Right ventricle myocardium inferior (tissue), 1 donor: ENCODE measurements at regions of chr1 and their contacts with region 1.

Region 1: GRCh38 chr1:109579491-109579890 is 31.1 kb downstream of the GNAI3 start:
- DNase-seq: no peak
- ATAC-seq: peak; percentile 69

Region 2: GRCh38 chr1:109397538-109398342 is 181.8 kb before region 1 on chr1 and contains the start of gene SORT1:
- intact Hi-C with region 1: no loop called
- DNase-seq: peak; percentile 90
- ATAC-seq: peak; percentile 92
- total RNA-seq, gene SORT1: 121 TPM

Region 3: DNA sequence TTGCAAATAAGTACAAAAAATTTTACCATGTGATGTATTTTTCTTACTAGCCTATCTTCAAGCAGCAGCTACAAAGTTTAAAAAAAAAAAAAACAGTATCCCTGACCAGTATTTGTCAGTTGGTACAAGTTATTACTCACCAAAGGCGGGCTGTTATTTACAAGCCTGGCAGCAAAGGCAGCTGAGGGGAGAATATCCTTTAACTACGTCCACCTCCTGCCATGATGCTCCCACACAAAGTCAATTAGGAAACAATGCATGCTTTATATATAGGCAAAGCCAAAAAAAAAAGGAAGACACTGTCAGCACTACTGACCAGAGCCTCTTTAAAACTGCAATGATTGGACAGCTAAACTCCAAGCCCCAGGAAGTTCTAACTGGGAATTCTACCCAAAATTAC is 166.9 kb before region 1 on chr1:
- intact Hi-C with region 1: no loop called
- DNase-seq: no peak
- ATAC-seq: no peak

Region 4: DNA sequence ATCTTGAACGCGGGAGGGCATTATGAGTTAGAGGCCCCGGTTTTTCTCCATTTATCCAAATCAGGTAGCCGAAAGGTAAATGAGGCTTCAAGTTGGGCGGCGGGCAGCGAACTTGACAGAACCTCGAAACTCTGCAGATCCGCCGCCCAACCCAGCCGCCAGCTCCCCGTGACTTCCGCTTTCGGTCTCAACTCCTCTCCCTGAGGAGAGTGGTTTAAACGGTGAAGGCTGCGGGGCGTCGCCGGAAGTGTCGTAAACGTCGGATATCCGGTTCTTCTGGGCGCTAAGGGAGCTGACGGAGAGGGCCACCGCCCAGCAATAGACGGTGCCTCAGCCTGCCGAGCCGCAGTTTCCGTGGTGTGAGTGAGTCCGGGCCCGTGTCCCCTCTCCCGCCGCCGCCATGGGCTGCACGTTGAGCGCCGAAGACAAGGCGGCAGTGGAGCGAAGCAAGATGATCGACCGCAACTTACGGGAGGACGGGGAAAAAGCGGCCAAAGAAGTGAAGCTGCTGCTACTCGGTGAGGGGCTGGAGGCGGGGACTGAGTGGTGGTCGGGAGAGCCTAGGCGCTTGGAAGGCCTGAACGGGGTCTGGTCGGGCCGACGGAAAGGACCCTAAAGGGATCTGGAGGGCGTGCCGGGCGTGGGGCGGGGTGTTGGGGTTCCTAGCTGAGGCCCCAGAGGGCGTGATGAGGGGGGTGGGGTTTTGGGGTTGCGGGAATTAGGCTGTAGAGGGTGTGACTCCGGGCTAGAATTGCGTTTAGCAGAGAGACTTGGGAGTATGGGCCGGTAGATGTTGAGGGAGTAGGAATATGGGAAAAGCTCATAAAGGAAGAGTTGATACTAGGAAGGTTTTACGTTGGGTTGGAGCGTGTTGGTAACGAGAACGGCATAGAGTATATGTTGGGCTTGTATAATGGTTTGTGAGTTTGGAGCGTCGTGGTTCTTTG is 30.9 kb before region 1 on chr1 and contains the start of gene GNAI3:
- intact Hi-C with region 1: no loop called
- DNase-seq: peak; percentile 97
- ATAC-seq: peak; percentile 97
- total RNA-seq, gene GNAI3: 2.3 TPM

Region 5: DNA sequence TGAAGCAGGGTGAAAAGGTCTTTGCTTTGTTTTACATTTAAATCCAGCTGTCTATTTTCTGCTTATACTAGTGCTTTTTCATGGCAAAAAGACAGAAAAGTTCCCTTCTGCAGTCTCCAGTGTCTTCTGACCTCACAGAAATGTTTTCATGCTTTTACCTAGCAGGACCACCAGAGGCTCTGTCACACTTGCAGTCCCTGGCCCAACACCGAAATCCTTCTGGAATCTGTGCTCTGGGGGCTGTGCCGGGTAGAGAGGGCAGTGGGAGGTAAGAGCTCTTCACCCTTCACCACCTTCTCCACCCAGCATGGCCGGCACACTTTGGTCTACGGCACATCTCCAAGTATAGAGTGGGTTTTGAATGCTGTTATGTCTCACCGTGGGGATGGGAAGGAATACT is 19.2 kb after region 1 on chr1:
- intact Hi-C with region 1: loop called (anchors 2 kb)
- DNase-seq: no peak
- ATAC-seq: no peak

Region 6: GRCh38 chr1:109620841-109621286 is 41.4 kb after region 1 on chr1:
- intact Hi-C with region 1: loop called (anchors 5 kb)
- DNase-seq: peak; percentile 99
- ATAC-seq: peak; percentile 82